ENCODE measurements at regions of chr7 and their contacts with region 1.

Region 1: GRCh38 chr7:123748734-123749536 is at the start of gene WASL:
- DNase-seq: peak; percentile 93 to 96
- H3K4me3 ChIP-seq: peak within 1 kb of the TSS; percentile 100
- H3K4me3 Mint-ChIP-seq: peak within 1 kb of the TSS; percentile 100
- H3K27ac Mint-ChIP-seq: peak within 1 kb of the TSS; percentile 98
- H3K4me1 ChIP-seq: peaks cover 20% of the 10 kb centered on the region
- H3K4me1 Mint-ChIP-seq: peaks cover 30% of the 10 kb centered on the region
- H3K27me3 ChIP-seq: no peaks in the 10 kb centered on the region
- H3K27me3 Mint-ChIP-seq: no peaks in the 10 kb centered on the region
- CTCF ChIP-seq: no peak
- total RNA-seq, gene WASL: 42.3 TPM in 2 replicates

Region 2: GRCh38 chr7:123557398-123558288 is 191.3 kb before region 1 on chr7 and contains the start of gene NDUFA5:
- CTCF ChIA-PET with region 1: no interaction called
- POLR2A ChIA-PET with region 1: interaction called, 8 read pairs
- intact Hi-C with region 1: loop called (anchors 1 kb)
- DNase-seq: peak; percentile 99
- H3K4me3 ChIP-seq: peak within 1 kb of the TSS; percentile 58
- H3K4me3 Mint-ChIP-seq: no peak within 1 kb of the TSS
- H3K27ac Mint-ChIP-seq: no peak within 1 kb of the TSS
- H3K4me1 ChIP-seq: peaks cover 5% of the 10 kb centered on the region; the same call in 1 of the 2 replicates
- H3K4me1 Mint-ChIP-seq: no peaks in the 10 kb centered on the region
- H3K27me3 ChIP-seq: no peaks in the 10 kb centered on the region
- H3K27me3 Mint-ChIP-seq: peaks cover 3% of the 10 kb centered on the region
- CTCF ChIP-seq: no peak
- total RNA-seq, gene NDUFA5: 87.9 and 88.9 TPM in 2 replicates

Region 3: GRCh38 chr7:123712619-123713018 is 36.3 kb before region 1 on chr7:
- CTCF ChIA-PET with region 1: no interaction called
- POLR2A ChIA-PET with region 1: interaction called, 3 read pairs
- intact Hi-C with region 1: loop called (anchors 5 kb)
- DNase-seq: no peak
- H3K4me3 ChIP-seq: no peak overlapping the region
- H3K4me3 Mint-ChIP-seq: no peak overlapping the region
- H3K27ac Mint-ChIP-seq: no peak overlapping the region
- H3K4me1 ChIP-seq: peaks cover 23% of the 10 kb centered on the region
- H3K4me1 Mint-ChIP-seq: peaks cover 22% of the 10 kb centered on the region
- H3K27me3 ChIP-seq: no peaks in the 10 kb centered on the region
- H3K27me3 Mint-ChIP-seq: no peaks in the 10 kb centered on the region
- CTCF ChIP-seq: no peak

Region 4: GRCh38 chr7:123738356-123738755 is 10.6 kb before region 1 on chr7:
- CTCF ChIA-PET with region 1: interaction called, 5 read pairs
- POLR2A ChIA-PET with region 1: interaction called, 7 read pairs
- intact Hi-C with region 1: loop called (anchors 1 kb)
- DNase-seq: peak in 1 of 2 experiments; percentile 34
- H3K4me3 ChIP-seq: no peak overlapping the region
- H3K4me3 Mint-ChIP-seq: peak overlapping the region; percentile 49
- H3K27ac Mint-ChIP-seq: no peak overlapping the region
- H3K4me1 ChIP-seq: peaks cover 31% of the 10 kb centered on the region
- H3K4me1 Mint-ChIP-seq: peaks cover 16% of the 10 kb centered on the region
- H3K27me3 ChIP-seq: no peaks in the 10 kb centered on the region
- H3K27me3 Mint-ChIP-seq: no peaks in the 10 kb centered on the region
- CTCF ChIP-seq: no peak